Motor neuron (in vitro differentiated cells): ENCODE measurements at regions of chr9 and their contacts with region 1.

Region 1: DNA sequence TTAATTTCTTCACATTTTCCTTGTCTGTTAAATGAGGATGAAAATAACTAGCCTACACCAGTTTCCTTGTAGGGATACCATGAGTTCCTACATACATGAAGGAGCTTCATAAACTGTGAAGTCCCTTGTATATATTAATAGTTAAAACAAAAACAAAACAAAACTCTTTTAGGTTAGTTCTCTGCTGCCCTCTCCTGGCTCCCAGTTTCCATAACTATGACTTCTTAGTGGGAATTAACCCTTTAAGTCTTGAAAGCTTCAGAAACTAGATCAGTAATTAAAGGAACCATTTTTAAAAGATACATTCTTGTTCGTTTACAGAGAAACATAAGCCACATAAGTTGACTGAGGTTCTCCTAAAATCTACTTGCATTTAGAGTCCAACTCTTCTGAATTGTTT is 500.0 kb upstream of the C9orf72 start:
- ATAC-seq: peak in 3 of 8 experiments; percentile 20 to 44 (median 31)
- H3K4me3 ChIP-seq: no peak overlapping the region
- H3K27ac ChIP-seq: no peak overlapping the region
- H3K4me1 ChIP-seq: no peaks in the 10 kb centered on the region

Region 2: DNA sequence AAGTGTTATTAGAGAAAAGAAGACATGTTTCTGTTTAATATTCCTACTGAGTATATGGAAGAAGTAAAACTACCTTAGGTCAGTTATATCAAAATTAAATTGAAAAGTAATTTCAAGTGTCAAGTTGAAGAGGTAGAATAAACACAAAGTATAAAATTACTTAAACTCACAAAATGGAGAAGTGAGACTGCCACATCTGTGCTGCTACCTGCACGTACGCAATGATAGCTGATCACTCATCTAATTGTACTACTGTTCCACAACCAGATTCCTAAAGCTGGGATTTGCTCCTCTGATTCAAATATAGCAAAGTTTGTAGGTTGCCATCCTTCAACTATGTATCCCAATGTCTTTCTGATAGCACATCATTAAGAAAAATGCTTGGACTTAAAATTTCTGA is 801.2 kb before region 1 on chr9:
- in situ Hi-C with region 1: no loop called
- ATAC-seq: no peak
- H3K4me3 ChIP-seq: no peak overlapping the region
- H3K27ac ChIP-seq: no peak overlapping the region
- H3K4me1 ChIP-seq: no peaks in the 10 kb centered on the region

Region 3: DNA sequence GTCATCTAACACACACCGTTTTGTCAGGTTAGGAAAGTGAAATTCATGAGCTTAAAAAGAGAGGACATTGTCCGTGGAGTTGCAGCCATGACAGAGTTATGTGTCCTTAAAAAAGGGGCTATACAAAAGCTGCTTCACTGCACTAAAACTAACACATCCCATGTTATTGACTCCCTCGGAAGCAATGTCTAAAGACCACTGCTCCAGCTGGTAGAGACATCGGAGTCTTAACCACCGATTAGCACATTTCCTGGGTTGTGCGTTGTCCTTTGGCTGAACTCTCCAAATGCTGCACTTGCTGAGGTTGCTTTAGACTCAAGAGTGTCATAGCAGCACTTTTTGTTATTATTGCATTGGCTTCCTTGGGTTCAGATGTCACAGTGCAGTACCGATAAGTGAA is 371.7 kb before region 1 on chr9:
- in situ Hi-C with region 1: loop called in 1 of 9 experiments (anchors 25 kb)
- ATAC-seq: peak in 2 of 8 experiments; percentile 27 to 42
- H3K4me3 ChIP-seq: no peak overlapping the region
- H3K27ac ChIP-seq: no peak overlapping the region
- H3K4me1 ChIP-seq: no peaks in the 10 kb centered on the region

Region 4: GRCh38 chr9:27726244-27727081 is 346.8 kb before region 1 on chr9:
- in situ Hi-C with region 1: loop called in 3 of 9 experiments (anchors 10 to 25 kb)
- ATAC-seq: peak; percentile 85 to 97 (median 94)
- H3K4me3 ChIP-seq: no peak overlapping the region
- H3K27ac ChIP-seq: no peak overlapping the region
- H3K4me1 ChIP-seq: peaks cover 0 to 11% of the 10 kb centered on the region in 2 donors

Region 5: DNA sequence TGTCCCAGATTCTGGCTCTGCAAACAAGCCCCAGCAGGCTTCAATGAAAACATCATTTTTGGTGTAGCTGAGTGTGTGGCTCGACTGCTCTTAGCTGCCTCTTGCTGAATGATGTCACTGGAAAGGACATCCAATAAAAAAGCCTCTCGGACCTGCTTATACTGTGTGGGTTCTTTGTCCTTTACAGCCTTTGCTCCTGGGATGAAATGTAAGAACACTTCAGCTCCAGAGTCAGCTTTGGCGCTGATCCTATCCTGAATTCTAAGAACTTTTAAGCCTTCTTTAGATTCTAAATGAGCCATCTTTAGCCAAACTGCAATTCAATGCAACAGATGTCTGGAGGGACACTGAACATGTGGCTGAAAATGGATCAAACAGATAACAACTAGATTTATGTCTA is 95.3 kb before region 1 on chr9:
- in situ Hi-C with region 1: no loop called
- ATAC-seq: peak in 4 of 8 experiments; percentile 25 to 69 (median 46)
- H3K4me3 ChIP-seq: no peak overlapping the region
- H3K27ac ChIP-seq: no peak overlapping the region
- H3K4me1 ChIP-seq: peaks cover 0 to 12% of the 10 kb centered on the region in 2 donors

Region 6: DNA sequence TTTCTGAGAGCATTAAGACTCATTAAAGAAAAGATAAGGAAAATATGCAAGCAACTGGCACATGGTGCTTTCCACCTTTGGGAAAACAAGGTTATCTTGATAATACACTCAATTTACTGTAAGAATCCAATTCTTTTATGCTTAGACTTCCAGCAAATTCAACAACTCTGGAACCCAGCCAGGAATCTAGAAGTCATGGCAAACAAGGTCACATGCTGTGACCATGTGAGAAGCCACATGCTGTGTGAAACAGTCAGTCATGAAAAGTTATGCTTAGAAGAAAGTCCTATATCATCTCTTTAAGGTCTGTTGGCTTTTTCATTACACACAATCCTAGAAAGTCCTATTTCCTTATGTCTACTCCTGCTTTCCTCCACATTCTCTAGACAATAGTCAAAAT is 81.8 kb after region 1 on chr9:
- in situ Hi-C with region 1: no loop called
- ATAC-seq: no peak
- H3K4me3 ChIP-seq: no peak overlapping the region
- H3K27ac ChIP-seq: no peak overlapping the region
- H3K4me1 ChIP-seq: no peaks in the 10 kb centered on the region

Region 7: GRCh38 chr9:28234894-28235277 is 161.6 kb after region 1 on chr9:
- in situ Hi-C with region 1: no loop called
- ATAC-seq: peak in 2 of 8 experiments; percentile 57 to 60
- H3K4me3 ChIP-seq: no peak overlapping the region
- H3K27ac ChIP-seq: no peak overlapping the region
- H3K4me1 ChIP-seq: no peaks in the 10 kb centered on the region